ENCODE measurements at regions of chr9 and their contacts with region 1.

Region 1: DNA sequence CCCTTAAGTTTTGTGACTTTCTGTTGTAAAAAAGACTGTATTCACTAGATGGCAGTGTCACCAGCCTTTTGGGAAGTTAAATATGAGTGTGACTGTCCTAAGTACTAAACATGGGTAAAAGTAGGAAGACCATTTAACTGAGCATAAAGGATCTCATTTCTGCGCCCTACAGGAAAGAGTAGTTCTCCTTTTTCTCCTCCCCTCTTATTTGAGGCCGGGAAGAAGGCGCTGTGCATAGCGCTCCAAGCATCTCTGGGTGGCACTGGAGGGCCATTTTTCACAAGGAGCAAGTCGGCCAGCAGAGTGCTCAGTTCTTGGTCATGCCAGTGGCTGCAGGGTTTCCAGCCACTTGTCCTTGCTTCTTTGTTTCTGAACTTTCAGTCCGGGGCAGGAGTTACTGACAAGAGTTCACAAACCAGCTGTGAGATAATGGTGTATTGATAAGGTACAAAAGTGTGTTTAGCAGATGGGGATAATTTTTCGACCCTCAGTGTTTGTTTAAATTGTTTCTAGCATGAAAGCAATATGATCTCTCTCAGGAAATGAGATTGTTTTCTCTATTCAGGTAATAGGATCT is 227.6 kb upstream of the DMRT1 start:
- ATAC-seq: peak; percentile 83 to 99 (median 98)
- H3K4me3 ChIP-seq: no peak overlapping the region
- H3K27ac ChIP-seq: no peak overlapping the region
- H3K4me1 ChIP-seq: peaks cover 0 to 3% of the 10 kb centered on the region in 2 donors

Region 2: DNA sequence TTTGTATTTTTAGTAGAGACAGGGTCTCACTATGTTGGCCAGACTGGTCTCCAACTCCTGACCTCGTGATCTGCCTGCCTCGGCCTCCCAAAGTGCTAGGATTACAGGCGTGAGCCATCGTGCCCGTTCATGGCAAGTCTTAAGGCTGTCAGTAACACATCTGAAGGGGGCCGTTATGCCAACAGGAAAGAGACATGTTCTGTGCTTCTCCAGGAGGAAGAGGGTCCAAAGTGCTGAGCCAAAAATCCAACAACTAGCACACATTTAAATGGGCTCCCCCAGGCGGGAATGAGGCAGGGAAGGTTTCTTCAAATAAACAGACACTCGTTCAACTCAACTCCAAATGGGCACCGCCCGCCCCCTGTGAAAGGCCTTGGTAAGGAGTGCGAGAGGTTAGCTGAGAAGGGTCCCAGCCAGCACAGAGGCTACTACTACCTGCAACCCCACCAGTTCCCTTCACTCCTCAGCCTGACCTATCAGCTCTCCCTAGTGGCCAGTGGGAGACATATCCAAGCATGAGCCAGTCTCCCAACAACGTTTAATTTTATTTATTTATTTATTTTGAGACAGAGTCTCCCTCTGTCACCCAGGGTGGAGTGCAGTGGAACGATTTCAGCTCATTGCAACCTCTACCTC is 143.5 kb after region 1 on chr9:
- in situ Hi-C with region 1: loop called in 3 of 9 experiments (anchors 5 to 10 kb)
- ATAC-seq: peak in 5 of 8 experiments; percentile 38 to 93 (median 81)
- H3K4me3 ChIP-seq: no peak overlapping the region
- H3K27ac ChIP-seq: no peak overlapping the region
- H3K4me1 ChIP-seq: no peaks in the 10 kb centered on the region

Region 3: DNA sequence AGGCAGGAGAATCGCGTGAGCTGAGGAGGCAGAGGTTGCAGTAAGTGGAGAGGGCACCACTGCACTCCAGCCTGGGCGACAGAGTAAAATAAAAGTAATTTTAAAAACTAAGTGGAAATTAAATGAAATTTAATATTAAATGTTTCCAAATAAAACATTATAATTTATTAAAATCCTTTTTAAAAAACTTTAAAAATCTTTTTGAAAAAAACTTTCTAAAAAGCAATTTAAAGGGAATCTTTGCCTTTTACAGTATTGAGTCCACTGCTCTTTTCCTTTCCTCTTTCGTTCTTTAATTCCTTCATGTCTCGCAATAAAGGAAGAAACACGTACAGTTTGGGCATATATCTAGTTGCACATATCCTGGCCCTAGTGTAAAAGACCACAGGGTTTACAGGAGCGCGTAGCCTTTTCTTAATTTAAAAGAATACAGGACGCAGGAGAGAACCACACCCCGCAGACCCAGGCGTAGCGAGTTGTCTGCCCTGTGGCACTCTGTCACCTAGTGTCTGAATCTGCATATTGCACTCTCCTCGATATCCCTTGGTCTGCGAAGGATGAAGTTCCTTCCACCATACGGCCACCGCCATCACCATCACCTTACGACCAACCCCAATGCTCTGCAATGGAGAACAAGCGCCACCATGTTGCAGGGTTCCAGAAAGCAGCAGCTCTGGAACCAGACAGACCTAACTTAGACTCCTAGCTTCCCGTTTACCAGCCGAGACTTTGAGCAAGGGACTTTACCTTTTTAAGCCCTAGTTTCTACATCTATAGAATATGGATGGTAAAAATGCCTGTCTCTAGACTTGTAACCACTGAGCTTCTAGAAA is 150.0 kb after region 1 on chr9:
- in situ Hi-C with region 1: loop called in 3 of 9 experiments (anchors 5 to 10 kb)
- ATAC-seq: peak in 6 of 8 experiments; percentile 35 to 100 (median 90)
- H3K4me3 ChIP-seq: no peak overlapping the region
- H3K27ac ChIP-seq: no peak overlapping the region
- H3K4me1 ChIP-seq: no peaks in the 10 kb centered on the region

Region 4: GRCh38 chr9:792282-793260 is 178.7 kb after region 1 on chr9:
- in situ Hi-C with region 1: loop called in 1 of 9 experiments (anchors 25 kb)
- ATAC-seq: peak in 1 of 8 experiments; percentile 57
- H3K4me3 ChIP-seq: no peak overlapping the region
- H3K27ac ChIP-seq: no peak overlapping the region
- H3K4me1 ChIP-seq: no peaks in the 10 kb centered on the region

Region 5: GRCh38 chr9:976258-976942 is 362.5 kb after region 1 on chr9 and contains the start of gene DMRT3:
- in situ Hi-C with region 1: loop called in 2 of 9 experiments (anchors 25 kb)
- ATAC-seq: peak in 6 of 8 experiments; percentile 75 to 86 (median 79)
- H3K4me3 ChIP-seq: peak within 1 kb of the TSS; percentile 8 to 41 (median 29)
- H3K27ac ChIP-seq: no peak within 1 kb of the TSS
- H3K4me1 ChIP-seq: peaks cover 0 to 10% of the 10 kb centered on the region in 2 donors
- total RNA-seq, gene DMRT3: 0.10 to 2.4 (median 0.80) TPM in 6 of 8 experiments, not detected in the others

Region 6: DNA sequence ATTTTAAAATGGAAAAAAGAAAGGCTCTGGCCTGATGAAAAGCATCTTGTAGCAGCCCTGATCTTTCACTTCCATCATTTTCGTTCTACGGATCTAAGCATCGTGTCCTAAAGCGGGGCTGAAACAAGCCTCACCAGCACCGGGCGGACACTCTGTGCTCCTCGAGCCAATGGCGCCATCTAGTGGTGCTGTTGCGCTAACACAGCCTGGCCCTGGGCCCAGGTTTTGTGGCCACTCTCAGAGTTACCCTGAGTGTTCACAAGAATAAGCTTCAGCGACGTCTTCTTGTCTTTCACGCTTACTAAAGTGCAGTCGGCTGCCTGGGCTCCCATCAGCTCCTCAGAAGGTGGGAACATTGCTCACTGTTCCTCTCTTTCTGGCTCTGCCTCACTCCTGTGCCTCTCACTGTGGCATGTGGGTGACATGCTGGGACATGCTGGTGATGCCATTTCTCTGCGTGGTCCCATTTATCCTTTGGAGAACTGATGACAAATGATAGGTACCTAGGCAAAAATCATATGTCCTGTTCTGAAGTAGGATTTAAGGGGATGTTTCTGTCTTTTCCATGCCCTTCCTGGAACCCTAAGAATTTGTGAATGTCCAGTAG is 395.3 kb after region 1 on chr9:
- in situ Hi-C with region 1: loop called in 2 of 9 experiments (anchors 25 kb)
- ATAC-seq: peak; percentile 77 to 99 (median 97)
- H3K4me3 ChIP-seq: no peak overlapping the region
- H3K27ac ChIP-seq: no peak overlapping the region
- H3K4me1 ChIP-seq: no peaks in the 10 kb centered on the region